Uterus (tissue), 4 donors: ENCODE measurements at regions of chr9 and their contacts with region 1.

Region 1: DNA sequence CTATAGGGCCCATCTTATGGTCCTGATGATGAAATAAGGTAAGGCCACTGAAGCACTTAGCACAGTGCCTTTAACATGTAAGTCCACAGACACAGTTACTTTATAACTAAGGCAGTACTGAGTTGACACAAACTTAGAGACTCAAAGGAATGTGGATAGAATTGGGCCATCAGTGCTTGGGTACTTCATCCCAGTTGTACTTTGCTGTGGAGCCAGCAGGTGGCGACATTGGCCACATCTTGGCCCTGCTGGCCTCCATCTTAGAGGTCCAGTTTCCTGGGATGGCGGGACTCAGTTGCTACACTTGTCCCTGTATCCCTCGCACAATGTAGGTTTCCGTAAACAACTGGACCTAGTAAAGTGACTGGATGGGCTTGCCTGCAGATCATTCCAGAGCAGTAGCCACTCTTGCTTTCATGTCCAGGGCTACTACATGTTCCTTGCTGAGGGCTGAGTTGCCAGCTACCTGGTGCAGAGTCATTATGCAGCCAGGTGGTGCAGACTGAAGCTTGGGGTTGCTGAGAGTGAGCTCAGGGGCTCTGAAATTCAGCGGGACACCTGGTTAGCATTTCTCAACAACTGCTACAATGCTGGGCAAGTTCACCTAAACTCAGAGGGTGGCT is 10.6 kb downstream of the MTAP start:
- DNase-seq: peak; percentile 43 to 54
- H3K4me3 ChIP-seq: no peak overlapping the region
- H3K27ac ChIP-seq: no peak overlapping the region
- H3K4me1 ChIP-seq: no peaks in the 10 kb centered on the region
- H3K27me3 ChIP-seq: no peaks in the 10 kb centered on the region
- CTCF ChIP-seq: peak; percentile 52 to 59 (median 56)
- POLR2A ChIP-seq: no peak

Region 2: GRCh38 chr9:21958833-21959232 is 145.8 kb after region 1 on chr9:
- intact Hi-C with region 1: no loop called
- DNase-seq: no peak
- H3K4me3 ChIP-seq: no peak overlapping the region
- H3K27ac ChIP-seq: no peak overlapping the region
- H3K4me1 ChIP-seq: no peaks in the 10 kb centered on the region
- H3K27me3 ChIP-seq: peaks cover 0 to 5% of the 10 kb centered on the region in 2 donors
- CTCF ChIP-seq: no peak
- POLR2A ChIP-seq: no peak

Region 3: DNA sequence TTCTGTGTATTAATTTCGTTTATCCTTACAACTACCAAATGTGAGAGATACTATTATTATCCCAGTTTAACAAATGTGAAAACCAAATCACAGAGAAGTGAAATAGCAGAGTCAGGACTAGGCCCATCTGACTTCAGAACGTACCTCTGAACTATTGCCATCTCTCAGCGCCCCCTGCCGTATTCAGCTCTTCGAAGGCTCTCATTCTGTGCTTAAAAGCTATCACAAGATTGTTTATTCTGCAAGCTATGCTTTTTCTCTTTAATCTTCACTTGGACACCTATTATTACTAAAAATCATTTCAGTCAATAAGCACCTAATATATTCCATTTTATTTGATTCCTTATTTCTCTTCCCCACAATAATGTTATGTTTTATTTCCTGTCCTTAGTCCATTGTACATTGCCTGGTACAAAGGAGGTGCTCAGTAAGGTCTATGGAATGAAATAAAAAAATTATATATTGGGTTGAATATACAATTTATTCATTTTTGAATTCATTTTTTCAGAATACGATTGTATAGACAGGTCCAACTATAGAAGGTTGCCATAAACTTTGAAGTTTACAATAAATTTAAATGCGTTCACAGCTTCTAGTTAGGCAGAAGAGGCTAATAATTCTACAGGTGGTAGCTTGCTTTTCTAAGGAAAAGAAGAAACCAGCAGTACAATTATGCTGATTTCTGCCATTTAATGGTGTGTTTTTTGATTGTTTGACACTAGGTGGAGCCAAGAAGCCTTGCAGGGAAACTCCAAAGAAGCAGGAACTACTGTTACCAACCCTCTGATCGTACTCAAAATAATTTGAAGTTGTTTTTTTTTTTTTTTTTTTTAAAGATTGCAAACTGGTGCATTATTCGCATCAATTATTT is 431.3 kb after region 1 on chr9:
- intact Hi-C with region 1: loop called (anchors 10 kb)
- DNase-seq: no peak
- H3K4me3 ChIP-seq: no peak overlapping the region
- H3K27ac ChIP-seq: no peak overlapping the region
- H3K4me1 ChIP-seq: no peaks in the 10 kb centered on the region
- H3K27me3 ChIP-seq: no peaks in the 10 kb centered on the region
- CTCF ChIP-seq: peak; percentile 24 to 47 (median 30)
- POLR2A ChIP-seq: no peak

Region 4: GRCh38 chr9:22452415-22453010 is 639.5 kb after region 1 on chr9:
- intact Hi-C with region 1: loop called (anchors 10 kb)
- DNase-seq: peak; percentile 24 to 27
- H3K4me3 ChIP-seq: no peak overlapping the region
- H3K27ac ChIP-seq: no peak overlapping the region
- H3K4me1 ChIP-seq: no peaks in the 10 kb centered on the region
- H3K27me3 ChIP-seq: no peaks in the 10 kb centered on the region
- CTCF ChIP-seq: peak; percentile 45 to 70 (median 58)
- POLR2A ChIP-seq: no peak